PC-3 (cell line): ENCODE measurements at regions of chr6 and their contacts with region 1.

Region 1: DNA sequence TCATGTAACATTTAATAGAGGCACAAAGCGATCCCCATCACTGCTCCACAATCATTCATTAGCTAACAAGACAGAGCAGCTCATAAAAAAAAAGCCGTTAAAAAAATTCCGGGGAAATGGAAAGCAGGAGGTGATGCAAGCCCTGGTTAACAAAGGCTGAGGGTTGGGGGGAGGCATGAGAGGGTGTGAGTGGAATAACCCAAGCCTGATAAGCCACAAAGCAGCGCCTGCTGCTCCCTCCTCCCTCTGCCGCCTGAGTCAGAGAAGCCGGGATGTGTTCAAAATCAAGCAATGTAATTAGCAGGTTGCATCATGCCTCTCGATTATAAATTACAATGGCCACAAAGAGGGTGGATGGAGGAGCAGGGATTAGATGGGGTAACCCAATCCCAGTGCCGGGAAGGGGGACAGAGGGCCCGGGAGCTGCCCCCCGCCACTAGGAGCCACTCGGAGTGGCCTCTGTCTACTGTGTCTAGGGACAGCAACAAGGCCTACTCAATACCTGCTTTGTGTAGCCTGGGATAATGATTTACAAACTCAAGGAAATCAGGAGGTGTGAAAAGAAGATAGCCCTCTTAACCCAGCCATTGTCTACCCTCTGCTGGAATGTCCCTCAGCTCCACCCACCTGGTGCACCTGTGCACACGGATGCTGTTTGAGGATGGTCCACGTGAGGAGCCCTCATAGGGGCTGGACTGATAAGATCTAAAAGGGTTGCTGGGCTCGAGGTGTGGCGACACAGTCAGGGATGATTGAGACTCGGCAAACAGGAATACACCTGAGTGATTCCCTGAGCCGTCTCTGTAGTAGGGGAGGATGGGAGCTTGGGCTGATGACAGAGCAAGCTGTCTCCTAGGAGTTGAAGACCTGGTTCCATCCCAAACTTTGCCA is 156.9 kb downstream of the VEGFA start:
- DNase-seq: peak; percentile 53
- ATAC-seq: peak; percentile 42; the same call in 1 of the 2 replicates
- H3K4me3 ChIP-seq: no peak overlapping the region
- H3K27ac ChIP-seq: peak overlapping the region; percentile 14; the same call in 1 of the 2 replicates
- H3K4me1 ChIP-seq: peaks cover 32% of the 10 kb centered on the region
- H3K27me3 ChIP-seq: no peaks in the 10 kb centered on the region
- CTCF ChIP-seq: no peak; the same call in 1 of the 2 replicates

Region 2: DNA sequence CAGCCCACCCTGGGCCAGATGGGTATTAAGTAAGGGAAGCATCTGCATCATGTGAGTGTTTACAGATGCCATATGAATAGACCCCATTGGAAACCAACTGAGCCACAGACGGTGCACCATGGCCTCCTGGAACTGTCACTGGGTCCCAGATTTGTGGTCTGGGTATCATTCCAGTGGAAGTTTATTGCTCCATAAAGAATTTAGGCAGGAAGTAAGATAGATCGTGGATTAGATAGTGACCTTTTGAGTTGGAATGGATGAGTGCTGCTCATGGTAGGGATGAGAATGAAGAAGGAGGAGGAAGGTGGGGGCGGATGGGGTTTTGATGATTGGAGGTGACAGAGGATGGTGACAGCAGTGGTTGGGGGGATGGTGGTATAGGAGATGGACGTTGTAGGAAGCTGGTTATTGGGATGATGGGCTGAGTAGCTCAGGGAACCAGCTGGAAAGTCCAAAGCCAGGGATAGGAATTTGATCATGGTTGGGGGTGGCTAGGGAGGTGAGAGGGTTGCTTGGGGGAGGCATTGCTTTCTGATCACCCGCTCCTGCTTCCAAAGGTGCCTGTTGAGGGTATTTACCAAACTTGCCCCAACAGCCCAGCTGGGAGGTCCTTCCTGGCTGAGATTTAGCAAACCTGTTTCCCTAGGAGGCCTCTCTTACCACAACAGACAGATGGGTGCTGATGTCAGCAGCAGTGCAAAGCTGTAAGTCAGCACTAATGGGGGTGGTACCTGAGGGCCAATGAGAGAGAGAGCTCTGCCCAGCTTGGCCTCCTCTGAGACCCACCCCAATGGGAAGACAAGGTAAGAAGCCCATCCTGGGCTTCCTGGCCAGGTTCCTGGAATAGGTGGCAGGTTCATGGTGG is 78.9 kb before region 1 on chr6:
- CTCF ChIA-PET with region 1: no interaction called
- POLR2A ChIA-PET with region 1: no interaction called
- intact Hi-C with region 1: loop called (anchors 5 kb)
- DNase-seq: peak; percentile 45
- ATAC-seq: no peak
- H3K4me3 ChIP-seq: no peak overlapping the region
- H3K27ac ChIP-seq: no peak overlapping the region
- H3K4me1 ChIP-seq: peaks cover 30% of the 10 kb centered on the region
- H3K27me3 ChIP-seq: no peaks in the 10 kb centered on the region
- CTCF ChIP-seq: no peak

Region 3: DNA sequence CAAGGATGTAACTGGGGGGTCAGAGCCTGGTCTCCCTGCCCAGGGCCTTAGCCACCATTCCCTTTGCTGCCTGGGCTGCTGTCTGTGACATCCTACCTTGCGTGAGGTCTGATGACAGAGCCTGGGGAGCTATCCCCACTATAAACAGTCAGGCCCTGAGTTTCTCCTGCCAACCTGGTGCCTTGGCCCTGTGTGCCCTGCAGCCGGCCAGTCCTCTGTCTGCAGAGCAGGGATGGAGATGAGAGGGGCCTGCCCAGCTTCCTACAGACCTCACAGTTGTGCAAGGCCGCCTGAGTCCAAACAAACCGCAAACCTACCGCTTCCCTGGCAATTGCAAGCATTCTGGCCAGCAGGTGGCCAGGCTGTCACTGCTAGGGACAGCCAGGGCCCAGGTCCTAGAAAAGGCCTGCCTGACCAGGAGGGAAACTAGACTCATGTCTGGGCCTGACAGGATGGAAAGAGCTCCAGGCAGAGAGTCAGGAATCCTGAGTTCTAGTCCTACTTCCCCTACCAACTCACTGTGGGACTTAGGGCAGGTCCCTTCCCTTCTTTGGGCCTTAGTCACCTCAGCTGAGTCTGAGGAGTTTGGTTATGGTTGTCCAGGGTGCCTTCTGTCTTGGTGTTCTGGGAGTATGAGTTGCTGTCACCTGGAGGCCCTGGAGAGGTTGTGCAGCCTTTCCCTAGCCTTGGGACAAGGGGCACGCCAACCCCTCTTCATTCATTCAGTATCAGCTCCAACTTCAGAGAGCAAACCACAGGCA is 70.7 kb before region 1 on chr6:
- CTCF ChIA-PET with region 1: no interaction called
- POLR2A ChIA-PET with region 1: no interaction called
- intact Hi-C with region 1: loop called (anchors 2 kb)
- DNase-seq: peak; percentile 33
- ATAC-seq: peak; percentile 87
- H3K4me3 ChIP-seq: no peak overlapping the region
- H3K27ac ChIP-seq: no peak overlapping the region
- H3K4me1 ChIP-seq: no peaks in the 10 kb centered on the region
- H3K27me3 ChIP-seq: no peaks in the 10 kb centered on the region
- CTCF ChIP-seq: peak; percentile 60

Region 4: DNA sequence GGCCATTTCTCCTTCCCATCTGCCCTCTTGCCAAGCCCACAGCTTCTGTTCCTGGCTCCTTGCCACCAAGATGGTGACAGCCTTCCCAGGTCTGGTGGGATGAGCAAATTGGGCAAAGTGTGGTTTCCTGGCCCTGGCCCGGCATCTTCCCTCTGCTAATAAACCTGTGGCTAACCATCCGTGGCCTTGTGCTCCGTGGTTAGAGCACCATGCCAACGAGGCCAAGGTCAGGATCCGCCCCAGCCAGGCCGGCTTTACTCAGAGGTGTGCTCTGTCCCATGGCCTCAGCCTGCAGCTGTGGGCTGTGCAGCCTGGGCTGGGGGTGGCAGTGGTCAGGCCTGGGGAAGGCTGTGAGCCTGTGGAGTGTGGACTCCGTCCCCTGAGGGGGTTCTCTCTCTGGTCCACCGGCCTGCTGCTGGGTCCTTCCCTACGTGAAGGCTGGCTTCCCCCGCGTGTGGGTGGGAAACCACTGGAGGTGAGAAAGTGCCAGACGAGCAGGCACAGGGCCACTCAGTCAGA is 39.5 kb before region 1 on chr6:
- CTCF ChIA-PET with region 1: no interaction called
- POLR2A ChIA-PET with region 1: no interaction called
- intact Hi-C with region 1: no loop called
- DNase-seq: no peak
- ATAC-seq: no peak
- H3K4me3 ChIP-seq: no peak overlapping the region
- H3K27ac ChIP-seq: no peak overlapping the region
- H3K4me1 ChIP-seq: no peaks in the 10 kb centered on the region
- H3K27me3 ChIP-seq: no peaks in the 10 kb centered on the region
- CTCF ChIP-seq: no peak

Region 5: GRCh38 chr6:43951063-43951755 is 24.3 kb after region 1 on chr6:
- CTCF ChIA-PET with region 1: no interaction called
- POLR2A ChIA-PET with region 1: no interaction called
- intact Hi-C with region 1: no loop called
- DNase-seq: peak; percentile 29
- ATAC-seq: peak; percentile 72
- H3K4me3 ChIP-seq: no peak overlapping the region
- H3K27ac ChIP-seq: no peak overlapping the region
- H3K4me1 ChIP-seq: no peaks in the 10 kb centered on the region; the same call in 1 of the 2 replicates
- H3K27me3 ChIP-seq: no peaks in the 10 kb centered on the region
- CTCF ChIP-seq: peak; percentile 45